ENCODE measurements at regions of chr12 and their contacts with region 1.

Region 1: GRCh38 chr12:34218165-34219045 is 196.1 kb downstream of the ALG10 start:
- DNase-seq: peak; percentile 44
- H3K4me3 ChIP-seq: peak overlapping the region; percentile 72
- H3K27ac ChIP-seq: peak overlapping the region; percentile 54
- H3K4me1 ChIP-seq: peaks cover 14% of the 10 kb centered on the region
- H3K27me3 ChIP-seq: peaks cover 12% of the 10 kb centered on the region
- CTCF ChIP-seq: peak; percentile 96

Region 2: DNA sequence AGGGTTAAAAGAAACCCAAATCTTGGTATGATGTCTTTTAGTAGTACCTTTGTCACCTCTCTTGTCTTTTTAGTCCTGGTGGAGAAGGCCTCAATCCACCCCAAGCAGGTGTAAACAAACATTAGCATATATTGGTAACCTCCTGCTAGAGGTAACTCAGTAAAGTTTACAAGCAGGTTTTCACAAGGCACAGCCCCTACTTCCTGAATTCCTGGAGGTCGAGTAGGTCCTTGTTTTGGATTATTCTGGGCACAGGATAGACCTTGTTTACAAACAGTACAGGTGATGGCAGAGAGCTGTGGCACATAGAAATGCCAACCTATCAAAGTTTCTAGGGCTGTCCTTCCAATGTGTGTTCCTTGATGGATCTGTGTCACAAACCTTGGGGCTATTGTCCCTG is 97.0 kb before region 1 on chr12:
- intact Hi-C with region 1: loop called (anchors 5 kb)
- DNase-seq: no peak
- H3K4me3 ChIP-seq: no peak overlapping the region
- H3K27ac ChIP-seq: no peak overlapping the region
- H3K4me1 ChIP-seq: peaks cover 2% of the 10 kb centered on the region
- H3K27me3 ChIP-seq: peaks cover 1% of the 10 kb centered on the region
- CTCF ChIP-seq: no peak